HepG2 (cell line): ENCODE measurements at regions of chr14 and their contacts with region 1.

Region 1: GRCh38 chr14:36604757-36605505 is 22.5 kb upstream of the NKX2-8 start:
- DNase-seq: peak; percentile 93
- ATAC-seq: peak; percentile 90
- H3K4me3 ChIP-seq: no peak overlapping the region
- H3K27ac ChIP-seq: no peak overlapping the region
- H3K4me1 ChIP-seq: peaks cover 7% of the 10 kb centered on the region; the same call in 1 of the 2 replicates
- H3K27me3 ChIP-seq: 0 out of 5 replicates have a peak, but pooled peaks cover 0 to 7% of the 10 kb centered on the region in 2 experiments
- CTCF ChIP-seq: peak; percentile 95
- EP300 ChIP-seq: no peak
- POLR2A ChIP-seq: no peak
- RAD21 ChIP-seq: peak; percentile 79

Region 2: DNA sequence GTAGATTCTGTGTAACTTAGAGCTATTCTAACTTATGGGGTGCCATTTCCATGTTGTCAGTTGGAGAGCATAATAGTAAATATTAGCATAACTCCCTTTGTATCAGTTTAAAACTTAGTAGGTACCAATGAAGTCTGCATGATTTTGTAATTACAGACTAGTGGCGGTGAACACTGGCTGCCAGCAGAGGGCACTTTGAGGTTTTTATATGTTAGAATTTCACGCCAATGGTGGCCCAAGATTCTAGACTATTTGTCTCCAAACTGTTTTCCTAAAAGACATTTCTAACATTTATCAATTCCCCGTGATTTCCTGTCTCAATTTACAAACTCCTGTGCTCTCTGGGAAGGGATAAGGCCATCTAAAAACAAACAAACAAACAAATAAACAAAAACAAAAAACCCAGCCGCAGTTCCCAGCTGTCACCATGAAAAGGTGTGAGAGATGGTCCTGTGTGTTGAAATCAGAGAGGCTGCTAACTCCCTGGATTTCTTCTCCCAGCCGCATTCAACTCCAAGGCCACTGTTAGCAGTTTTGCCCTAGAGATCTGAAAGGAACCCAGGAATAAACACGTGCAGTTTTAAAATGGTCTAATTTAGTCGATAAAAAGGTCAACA is 721.1 kb before region 1 on chr14:
- CTCF ChIA-PET with region 1: interaction called, 6 read pairs
- POLR2A ChIA-PET with region 1: no interaction called
- in situ Hi-C with region 1: no loop called
- intact Hi-C with region 1: loop called (anchors 2 kb)
- DNase-seq: peak; percentile 50
- ATAC-seq: peak; percentile 83
- H3K4me3 ChIP-seq: no peak overlapping the region
- H3K27ac ChIP-seq: no peak overlapping the region
- H3K4me1 ChIP-seq: peaks cover 5% of the 10 kb centered on the region; the same call in 1 of the 2 replicates
- H3K27me3 ChIP-seq: no peaks in the 10 kb centered on the region; a peak in 1 of 5 replicates
- CTCF ChIP-seq: peak; percentile 82
- EP300 ChIP-seq: 0 out of 4 replicates have a peak, but pooled peaks of 1 of the 2 experiments have one; percentile 4
- POLR2A ChIP-seq: no peak
- RAD21 ChIP-seq: peak; percentile 21; the same call in 1 of the 2 replicates

Region 3: DNA sequence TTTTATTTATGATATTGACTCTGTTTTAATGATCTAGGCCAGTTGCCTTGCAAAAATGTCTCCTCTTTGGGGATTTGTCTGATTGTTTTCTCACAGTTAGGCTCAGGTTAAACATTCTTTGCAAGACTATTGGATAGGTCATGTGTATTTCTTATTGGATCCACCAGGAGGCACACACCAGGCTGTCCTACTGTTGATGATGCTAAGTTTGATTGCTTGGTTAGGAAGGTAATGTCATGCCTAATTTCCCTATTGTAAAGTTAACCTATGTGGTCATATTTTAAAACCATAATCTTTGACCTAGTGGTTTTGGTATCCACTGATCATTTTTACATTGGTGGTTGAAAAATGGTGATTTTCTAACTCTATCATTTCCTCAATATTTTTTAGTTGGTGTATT is 641.7 kb before region 1 on chr14:
- CTCF ChIA-PET with region 1: no interaction called
- POLR2A ChIA-PET with region 1: no interaction called
- in situ Hi-C with region 1: no loop called
- intact Hi-C with region 1: loop called (anchors 1 kb)
- DNase-seq: peak; percentile 45
- ATAC-seq: peak; percentile 93
- H3K4me3 ChIP-seq: no peak overlapping the region
- H3K27ac ChIP-seq: no peak overlapping the region
- H3K4me1 ChIP-seq: no peaks in the 10 kb centered on the region
- H3K27me3 ChIP-seq: peaks cover 0 to 3% of the 10 kb centered on the region in 2 experiments; a peak in 1 of 5 replicates
- CTCF ChIP-seq: peak; percentile 48
- EP300 ChIP-seq: no peak
- POLR2A ChIP-seq: no peak
- RAD21 ChIP-seq: no peak

Region 4: GRCh38 chr14:36241183-36241582 is 363.7 kb before region 1 on chr14:
- CTCF ChIA-PET with region 1: no interaction called
- POLR2A ChIA-PET with region 1: no interaction called
- in situ Hi-C with region 1: no loop called
- intact Hi-C with region 1: loop called (anchors 1 kb)
- DNase-seq: no peak
- ATAC-seq: no peak
- H3K4me3 ChIP-seq: no peak overlapping the region
- H3K27ac ChIP-seq: no peak overlapping the region
- H3K4me1 ChIP-seq: peaks cover 7% of the 10 kb centered on the region; the same call in 1 of the 2 replicates
- H3K27me3 ChIP-seq: peaks cover 0 to 13% of the 10 kb centered on the region in 2 experiments; a peak in 3 of 5 replicates
- CTCF ChIP-seq: 0 out of 2 replicates have a peak, but pooled peaks have one; percentile 21
- EP300 ChIP-seq: no peak
- POLR2A ChIP-seq: no peak
- RAD21 ChIP-seq: no peak

Region 5: GRCh38 chr14:36941783-36942521 is 337.0 kb after region 1 on chr14:
- CTCF ChIA-PET with region 1: no interaction called
- POLR2A ChIA-PET with region 1: no interaction called
- in situ Hi-C with region 1: no loop called
- intact Hi-C with region 1: loop called (anchors 2 kb)
- DNase-seq: peak; percentile 62
- ATAC-seq: peak; percentile 98
- H3K4me3 ChIP-seq: no peak overlapping the region
- H3K27ac ChIP-seq: no peak overlapping the region
- H3K4me1 ChIP-seq: no peaks in the 10 kb centered on the region
- H3K27me3 ChIP-seq: no peaks in the 10 kb centered on the region
- CTCF ChIP-seq: peak; percentile 97
- EP300 ChIP-seq: no peak
- POLR2A ChIP-seq: no peak
- RAD21 ChIP-seq: peak; percentile 84